ENCODE measurements at regions of chr15 and their contacts with region 1.

Region 1: GRCh38 chr15:39624806-39625205 is 43.9 kb downstream of the THBS1 start:
- DNase-seq: peak; percentile 45
- ATAC-seq: peak; percentile 75
- H3K4me3 ChIP-seq: no peak overlapping the region
- H3K27ac ChIP-seq: 0 out of 2 replicates have a peak overlapping the region, but pooled peaks have one; percentile 24
- H3K4me1 ChIP-seq: peaks cover 30% of the 10 kb centered on the region
- H3K27me3 ChIP-seq: no peaks in the 10 kb centered on the region
- CTCF ChIP-seq: no peak
- EP300 ChIP-seq: peak; percentile 35 to 75; a peak in 2 of 4 replicates
- POLR2A ChIP-seq: no peak
- RAD21 ChIP-seq: no peak

Region 2: DNA sequence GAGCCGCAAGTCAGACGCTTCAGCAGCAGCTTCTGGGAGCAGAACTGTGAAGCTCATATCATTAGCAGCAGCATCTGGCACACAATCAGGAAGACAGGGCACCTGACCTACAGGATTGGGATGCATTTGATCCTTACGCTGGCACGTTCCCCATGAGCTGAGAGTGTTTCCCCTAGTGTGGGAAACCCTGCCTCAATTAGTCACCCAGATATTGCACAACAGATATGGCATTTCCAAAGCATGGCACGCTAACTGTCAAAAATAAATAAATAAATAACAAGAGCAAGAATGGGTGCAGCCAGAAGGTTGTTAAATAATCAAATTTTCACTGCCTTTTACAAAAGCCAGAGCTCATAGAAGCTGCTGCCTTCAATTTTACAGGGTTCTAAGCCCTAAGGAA is 233.6 kb before region 1 on chr15:
- CTCF ChIA-PET with region 1: no interaction called
- POLR2A ChIA-PET with region 1: no interaction called
- RAD21 ChIA-PET with region 1: no interaction called
- SMC1A ChIA-PET with region 1: no interaction called
- in situ Hi-C with region 1: no loop called
- intact Hi-C with region 1: no loop called
- DNase-seq: no peak
- ATAC-seq: no peak
- H3K4me3 ChIP-seq: no peak overlapping the region
- H3K27ac ChIP-seq: no peak overlapping the region
- H3K4me1 ChIP-seq: no peaks in the 10 kb centered on the region
- H3K27me3 ChIP-seq: no peaks in the 10 kb centered on the region; a peak in 1 of 4 replicates
- CTCF ChIP-seq: no peak
- EP300 ChIP-seq: no peak
- POLR2A ChIP-seq: no peak
- RAD21 ChIP-seq: no peak

Region 3: GRCh38 chr15:39504808-39505207 is 120.0 kb before region 1 on chr15:
- CTCF ChIA-PET with region 1: no interaction called
- POLR2A ChIA-PET with region 1: no interaction called
- RAD21 ChIA-PET with region 1: no interaction called
- SMC1A ChIA-PET with region 1: no interaction called
- in situ Hi-C with region 1: no loop called
- intact Hi-C with region 1: no loop called
- DNase-seq: no peak
- ATAC-seq: no peak
- H3K4me3 ChIP-seq: no peak overlapping the region
- H3K27ac ChIP-seq: no peak overlapping the region
- H3K4me1 ChIP-seq: 0 out of 2 replicates have a peak, but pooled peaks cover 3% of the 10 kb centered on the region
- H3K27me3 ChIP-seq: no peaks in the 10 kb centered on the region; a peak in 1 of 4 replicates
- CTCF ChIP-seq: no peak
- EP300 ChIP-seq: no peak
- POLR2A ChIP-seq: no peak
- RAD21 ChIP-seq: no peak

Region 4: DNA sequence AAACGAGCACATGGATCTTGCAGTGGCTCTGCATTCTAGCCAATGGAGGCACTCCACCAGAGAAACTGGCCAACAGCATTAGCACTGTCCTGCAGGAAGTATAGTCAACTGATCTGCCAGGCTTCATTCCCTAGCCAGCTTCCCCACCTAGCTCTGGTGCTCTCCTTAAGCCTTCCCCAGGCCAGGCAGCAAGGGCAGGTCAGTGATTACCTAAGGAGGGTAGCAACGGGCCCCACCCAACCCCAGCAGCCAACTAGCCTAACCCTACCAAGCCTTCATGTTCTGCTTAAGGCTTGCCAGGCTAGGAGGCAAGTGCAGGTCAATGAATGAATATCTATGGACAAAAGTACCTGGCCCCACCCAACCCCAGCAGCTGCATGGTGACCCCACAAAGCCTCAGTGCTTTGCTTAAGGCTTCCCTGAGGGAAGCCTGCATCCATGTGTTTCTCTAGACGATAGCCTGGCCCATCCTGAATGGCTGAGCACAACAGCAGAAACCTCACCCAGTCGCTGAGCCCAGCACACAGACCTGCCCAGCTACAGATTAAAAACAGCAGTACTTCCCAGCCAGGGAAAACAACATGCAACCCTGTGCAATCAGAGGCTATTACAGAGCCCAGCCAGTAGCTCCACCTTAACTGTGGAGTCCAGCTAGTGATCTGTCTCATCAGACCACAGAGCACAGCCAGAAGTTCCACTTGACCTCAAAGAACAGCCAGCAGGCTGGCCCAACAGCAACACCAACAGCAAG is 15.5 kb before region 1 on chr15:
- CTCF ChIA-PET with region 1: interaction called, 4 read pairs
- POLR2A ChIA-PET with region 1: no interaction called
- RAD21 ChIA-PET with region 1: interaction called, 6 read pairs
- SMC1A ChIA-PET with region 1: interaction called, 32 read pairs
- in situ Hi-C with region 1: no loop called
- intact Hi-C with region 1: no loop called
- DNase-seq: no peak
- ATAC-seq: no peak
- H3K4me3 ChIP-seq: no peak overlapping the region
- H3K27ac ChIP-seq: no peak overlapping the region
- H3K4me1 ChIP-seq: no peaks in the 10 kb centered on the region
- H3K27me3 ChIP-seq: peaks cover 0 to 2% of the 10 kb centered on the region in 2 experiments; a peak in 1 of 4 replicates
- CTCF ChIP-seq: no peak
- EP300 ChIP-seq: no peak
- POLR2A ChIP-seq: no peak
- RAD21 ChIP-seq: no peak

Region 5: DNA sequence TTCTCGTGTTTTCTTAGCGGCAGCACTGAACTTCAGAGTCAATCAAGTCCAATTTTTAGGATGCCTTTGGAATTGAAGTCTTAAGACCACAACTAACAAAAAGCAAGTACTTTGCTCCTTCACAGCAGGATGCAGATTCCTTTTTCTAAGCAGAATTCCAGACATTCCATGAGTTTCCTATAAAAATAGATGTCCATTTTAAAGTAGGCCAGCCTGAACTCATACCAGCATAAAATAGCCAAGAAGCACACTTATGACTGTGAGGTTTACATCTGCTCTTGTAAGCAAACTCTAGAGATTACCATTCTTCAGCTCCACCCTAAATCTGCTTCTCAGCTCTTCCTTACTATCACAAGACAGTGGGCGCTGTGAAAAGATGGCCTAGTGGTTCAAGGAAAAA is 41.9 kb after region 1 on chr15:
- CTCF ChIA-PET with region 1: interaction called, 7 read pairs
- POLR2A ChIA-PET with region 1: interaction called, 5 read pairs
- RAD21 ChIA-PET with region 1: interaction called, 11 read pairs
- SMC1A ChIA-PET with region 1: interaction called, 36 read pairs
- in situ Hi-C with region 1: no loop called
- intact Hi-C with region 1: no loop called
- DNase-seq: no peak
- ATAC-seq: no peak
- H3K4me3 ChIP-seq: no peak overlapping the region
- H3K27ac ChIP-seq: no peak overlapping the region
- H3K4me1 ChIP-seq: no peaks in the 10 kb centered on the region
- H3K27me3 ChIP-seq: no peaks in the 10 kb centered on the region
- CTCF ChIP-seq: no peak
- EP300 ChIP-seq: no peak
- POLR2A ChIP-seq: no peak
- RAD21 ChIP-seq: no peak

Region 6: GRCh38 chr15:39728845-39729244 is 104.0 kb after region 1 on chr15:
- CTCF ChIA-PET with region 1: no interaction called
- POLR2A ChIA-PET with region 1: no interaction called
- RAD21 ChIA-PET with region 1: no interaction called
- SMC1A ChIA-PET with region 1: no interaction called
- in situ Hi-C with region 1: no loop called
- intact Hi-C with region 1: no loop called
- DNase-seq: no peak
- ATAC-seq: no peak
- H3K4me3 ChIP-seq: no peak overlapping the region
- H3K27ac ChIP-seq: no peak overlapping the region
- H3K4me1 ChIP-seq: no peaks in the 10 kb centered on the region
- H3K27me3 ChIP-seq: no peaks in the 10 kb centered on the region; a peak in 1 of 4 replicates
- CTCF ChIP-seq: no peak
- EP300 ChIP-seq: no peak
- POLR2A ChIP-seq: no peak
- RAD21 ChIP-seq: no peak

Region 7: DNA sequence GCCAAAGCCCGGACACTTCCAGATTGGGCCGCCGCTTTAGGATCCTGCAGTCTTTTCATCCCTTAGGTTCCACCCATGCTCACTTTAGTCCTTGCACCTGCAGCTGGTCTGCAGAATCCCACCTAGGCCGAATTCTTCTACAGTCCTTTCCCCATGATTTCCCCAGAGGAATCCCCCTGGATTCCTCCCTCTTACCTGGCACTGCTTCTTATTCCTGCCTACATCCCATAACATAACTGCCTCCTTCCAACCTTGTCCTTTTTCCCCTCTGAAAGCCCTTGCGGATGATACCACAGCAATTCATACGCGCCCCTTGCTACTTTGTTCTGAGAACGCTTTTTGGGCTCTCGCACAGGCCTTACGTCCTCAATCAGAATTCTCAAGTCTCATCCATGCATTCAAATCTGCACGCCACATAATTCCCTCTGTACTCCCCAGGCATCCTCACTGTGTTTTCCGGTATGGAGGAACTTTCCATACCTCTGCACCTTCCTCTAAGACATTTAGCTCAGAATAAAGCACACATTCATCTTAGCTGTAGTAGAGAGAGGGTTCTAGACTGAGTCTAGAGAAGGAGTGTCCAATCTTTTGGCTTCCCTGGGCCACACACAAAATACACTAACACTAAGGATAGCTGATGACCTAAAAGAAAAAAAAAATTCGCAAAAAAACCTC is 309.7 kb after region 1 on chr15:
- CTCF ChIA-PET with region 1: no interaction called
- POLR2A ChIA-PET with region 1: no interaction called
- RAD21 ChIA-PET with region 1: no interaction called
- SMC1A ChIA-PET with region 1: no interaction called
- in situ Hi-C with region 1: no loop called
- intact Hi-C with region 1: no loop called
- DNase-seq: no peak
- ATAC-seq: peak; percentile 32
- H3K4me3 ChIP-seq: peak overlapping the region; percentile 80
- H3K27ac ChIP-seq: peak overlapping the region; percentile 80
- H3K4me1 ChIP-seq: peaks cover 7% of the 10 kb centered on the region; the same call in 1 of the 2 replicates
- H3K27me3 ChIP-seq: no peaks in the 10 kb centered on the region
- CTCF ChIP-seq: no peak
- EP300 ChIP-seq: no peak
- POLR2A ChIP-seq: no peak
- RAD21 ChIP-seq: no peak